Activated naive CD4-positive, alpha-beta T cell treated with anti-CD3 and anti-CD28 coated beads, Interleukin-2, amount 10 ng/mL, durations not matched to agents 7 days and 5 days (primary cell): ENCODE measurements at regions of chr6 and their contacts with region 1.

Region 1: GRCh38 chr6:15691250-15691869 is 28.5 kb upstream of the DTNBP1 start:
- DNase-seq: peak; percentile 85
- H3K4me3 Mint-ChIP-seq: no peak overlapping the region
- H3K27ac Mint-ChIP-seq: no peak overlapping the region
- H3K4me1 Mint-ChIP-seq: peaks cover 10% of the 10 kb centered on the region
- H3K27me3 Mint-ChIP-seq: peaks cover 16% of the 10 kb centered on the region

Region 2: GRCh38 chr6:16128759-16129622 is 437.6 kb after region 1 on chr6 and contains the start of gene MYLIP:
- CTCF ChIA-PET with region 1: interaction called, 12 read pairs
- DNase-seq: peak; percentile 97
- H3K4me3 Mint-ChIP-seq: peak within 1 kb of the TSS; percentile 84
- H3K27ac Mint-ChIP-seq: peak within 1 kb of the TSS; percentile 97
- H3K4me1 Mint-ChIP-seq: peaks cover 42% of the 10 kb centered on the region
- H3K27me3 Mint-ChIP-seq: peaks cover 34% of the 10 kb centered on the region

Region 3: DNA sequence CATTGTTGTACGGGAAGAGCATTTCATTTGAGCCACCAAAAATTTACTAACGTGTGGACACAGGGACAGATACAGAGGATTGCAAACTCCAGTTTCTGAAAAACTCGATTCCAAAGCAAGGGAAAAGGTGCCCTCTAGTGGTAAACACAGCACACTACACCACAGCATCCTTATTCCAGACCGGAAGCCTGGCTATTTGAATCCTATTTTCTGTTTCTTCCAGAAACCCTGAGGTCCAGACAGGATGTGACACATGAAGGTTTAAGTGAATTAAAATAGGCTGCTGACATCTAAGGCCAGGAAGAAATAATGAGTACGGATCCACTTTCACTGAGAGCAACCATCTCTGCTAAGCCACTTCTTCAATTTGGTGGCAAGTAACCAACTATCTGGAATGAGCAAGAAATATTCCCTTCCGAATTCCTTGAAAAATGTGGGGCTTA is 515.3 kb after region 1 on chr6:
- CTCF ChIA-PET with region 1: interaction called, 43 read pairs
- DNase-seq: peak; percentile 59
- H3K4me3 Mint-ChIP-seq: no peak overlapping the region
- H3K27ac Mint-ChIP-seq: no peak overlapping the region
- H3K4me1 Mint-ChIP-seq: no peaks in the 10 kb centered on the region
- H3K27me3 Mint-ChIP-seq: peaks cover 26% of the 10 kb centered on the region